Gastrocnemius medialis (tissue), 4 donors: ENCODE measurements at regions of chr3 and their contacts with region 1.

Region 1: GRCh38 chr3:111723293-111724215 is 128.4 kb upstream of the ZBED2 start:
- DNase-seq: no peak
- ATAC-seq: no peak
- H3K4me3 ChIP-seq: no peak overlapping the region
- H3K27ac ChIP-seq: no peak overlapping the region
- H3K4me1 ChIP-seq: no peaks in the 10 kb centered on the region
- H3K27me3 ChIP-seq: no peaks in the 10 kb centered on the region
- CTCF ChIP-seq: no peak
- POLR2A ChIP-seq: no peak

Region 2: DNA sequence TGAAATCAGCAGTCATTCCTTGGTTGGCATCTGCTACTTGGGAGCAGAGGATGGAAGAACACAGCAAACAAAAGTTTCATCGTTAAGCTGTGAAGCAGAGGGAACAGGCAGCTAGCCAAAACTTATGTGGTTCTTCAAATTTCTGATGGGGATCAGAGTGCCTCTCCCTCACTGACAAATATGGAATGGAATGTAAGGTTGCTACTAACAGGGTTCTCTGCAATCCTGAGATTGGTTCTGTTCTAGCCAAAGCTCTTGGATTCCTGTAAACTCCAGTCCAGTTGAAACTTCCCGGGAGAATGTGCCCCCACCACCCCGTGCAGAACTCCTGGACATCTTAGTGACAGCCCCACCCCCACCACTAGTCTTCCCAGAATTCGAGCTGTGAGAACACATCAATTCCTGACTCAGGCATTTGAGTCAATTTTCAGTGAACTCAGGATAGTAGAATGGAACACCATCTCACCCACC is 79.6 kb after region 1 on chr3:
- in situ Hi-C with region 1: no loop called
- intact Hi-C with region 1: loop called (anchors 10 kb)
- DNase-seq: peak; percentile 34 to 79
- ATAC-seq: peak; percentile 75 to 85
- H3K4me3 ChIP-seq: no peak overlapping the region
- H3K27ac ChIP-seq: peak overlapping the region; percentile 63 to 77 (median 68)
- H3K4me1 ChIP-seq: peaks cover 0 to 10% of the 10 kb centered on the region in 2 donors
- H3K27me3 ChIP-seq: no peaks in the 10 kb centered on the region
- CTCF ChIP-seq: no peak
- POLR2A ChIP-seq: no peak

Region 3: GRCh38 chr3:113329757-113330156 is 1606.2 kb after region 1 on chr3:
- in situ Hi-C with region 1: no loop called
- intact Hi-C with region 1: no loop called
- DNase-seq: no peak
- ATAC-seq: no peak
- H3K4me3 ChIP-seq: no peak overlapping the region
- H3K27ac ChIP-seq: no peak overlapping the region
- H3K4me1 ChIP-seq: no peaks in the 10 kb centered on the region
- H3K27me3 ChIP-seq: no peaks in the 10 kb centered on the region
- CTCF ChIP-seq: no peak
- POLR2A ChIP-seq: no peak